ENCODE measurements at regions of chr2 and their contacts with region 1.

Region 1: DNA sequence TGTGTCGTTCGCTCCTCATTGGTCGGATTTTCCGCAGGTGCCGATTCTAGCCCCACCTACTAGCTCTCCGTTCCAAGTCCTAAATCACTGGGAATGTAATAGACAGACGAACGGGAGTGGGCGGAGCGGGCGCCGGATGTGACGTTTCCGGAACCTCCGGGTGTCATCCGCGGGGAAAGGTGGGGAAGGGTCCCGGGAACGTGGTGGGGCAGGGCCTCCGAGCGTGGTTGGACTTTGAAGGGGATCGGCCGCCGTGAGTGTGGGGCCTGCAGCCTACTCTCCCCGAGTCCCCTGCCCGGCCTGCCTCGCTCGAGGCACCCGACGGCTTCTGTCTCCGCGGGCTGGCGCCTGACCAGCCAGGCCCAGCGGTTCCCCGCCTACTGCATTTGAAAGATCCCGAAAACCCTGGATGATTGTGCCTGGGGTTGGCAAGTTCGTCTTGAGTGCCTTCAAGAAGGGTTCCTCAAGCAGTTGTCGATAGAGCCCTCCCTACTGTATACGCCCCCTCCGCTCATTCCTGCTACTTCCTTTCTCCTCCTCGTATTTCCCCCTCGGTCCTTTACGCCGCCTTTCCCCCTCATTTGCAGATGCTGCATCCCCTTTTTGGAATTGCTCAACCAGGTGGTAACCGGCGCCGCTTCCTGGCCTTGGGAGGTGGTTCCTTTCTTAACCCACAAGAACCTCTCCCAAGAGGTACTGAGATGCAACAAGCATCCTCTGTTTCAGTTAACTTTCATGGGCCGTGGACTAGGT is at the start of gene STAMBP:
- DNase-seq: peak; percentile 95
- ATAC-seq: peak; percentile 75
- H3K4me3 Mint-ChIP-seq: peak within 1 kb of the TSS; percentile 97
- H3K27ac Mint-ChIP-seq: peak within 1 kb of the TSS; percentile 98
- H3K4me1 Mint-ChIP-seq: peaks cover 53% of the 10 kb centered on the region
- H3K27me3 Mint-ChIP-seq: no peaks in the 10 kb centered on the region
- total RNA-seq, gene STAMBP: 104 to 111 TPM

Region 2: GRCh38 chr2:73233154-73233931 is 595.7 kb before region 1 on chr2 and contains the start of gene PRADC1:
- CTCF ChIA-PET with region 1: no interaction called
- POLR2A ChIA-PET with region 1: no interaction called
- intact Hi-C with region 1: loop called in 1 of 2 experiments (anchors 2 kb)
- DNase-seq: peak; percentile 96
- ATAC-seq: peak; percentile 89
- H3K4me3 Mint-ChIP-seq: peak within 1 kb of the TSS; percentile 92
- H3K27ac Mint-ChIP-seq: peak within 1 kb of the TSS; percentile 98
- H3K4me1 Mint-ChIP-seq: peaks cover 32% of the 10 kb centered on the region
- H3K27me3 Mint-ChIP-seq: no peaks in the 10 kb centered on the region
- total RNA-seq, gene PRADC1: 11.8 to 12.1 TPM

Region 3: DNA sequence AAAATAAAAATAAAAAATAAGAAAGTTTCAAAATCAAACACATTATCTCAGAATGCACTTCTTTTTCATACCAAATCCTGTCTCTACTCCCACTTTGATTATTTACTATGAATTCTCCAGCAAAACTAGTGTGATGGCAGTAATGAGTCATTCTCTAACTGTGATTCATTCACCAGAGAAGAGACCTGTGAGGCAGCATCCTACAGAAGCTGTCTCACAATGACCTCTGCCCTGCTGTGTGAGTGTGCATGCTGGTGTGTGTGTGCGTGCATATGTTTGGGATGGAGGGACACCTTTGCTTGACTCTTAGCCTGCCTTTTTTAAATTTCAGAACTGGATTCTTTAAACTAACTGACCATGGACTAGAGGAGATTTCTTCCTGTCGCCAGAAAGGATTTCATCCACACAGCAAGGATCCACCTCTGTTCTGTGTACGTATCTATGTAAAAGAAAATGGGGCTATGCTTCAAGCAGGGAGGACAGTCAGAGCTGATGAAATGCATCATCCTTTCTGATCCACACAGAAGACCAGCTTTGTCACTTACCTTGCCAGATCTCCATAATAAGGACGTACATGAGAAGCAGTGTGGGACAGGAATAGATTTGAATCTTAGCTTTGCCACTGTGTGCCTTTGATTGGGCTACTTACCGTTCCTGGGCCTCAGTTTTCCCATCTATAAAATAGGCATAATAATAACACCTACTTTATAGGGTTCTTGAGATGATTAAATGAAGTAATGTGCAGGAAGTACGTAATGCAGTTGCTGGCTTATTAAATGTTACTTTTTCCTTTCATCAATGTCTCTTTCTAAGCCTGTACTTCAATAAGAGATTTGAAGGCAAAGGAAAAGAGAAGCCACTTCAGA is 31.0 kb after region 1 on chr2:
- CTCF ChIA-PET with region 1: interaction called, 12 read pairs
- POLR2A ChIA-PET with region 1: no interaction called
- intact Hi-C with region 1: loop called (anchors 1 kb)
- DNase-seq: peak; percentile 76
- ATAC-seq: peak; percentile 100
- H3K4me3 Mint-ChIP-seq: no peak overlapping the region
- H3K27ac Mint-ChIP-seq: peak overlapping the region; percentile 77
- H3K4me1 Mint-ChIP-seq: peaks cover 32% of the 10 kb centered on the region
- H3K27me3 Mint-ChIP-seq: no peaks in the 10 kb centered on the region

Region 4: DNA sequence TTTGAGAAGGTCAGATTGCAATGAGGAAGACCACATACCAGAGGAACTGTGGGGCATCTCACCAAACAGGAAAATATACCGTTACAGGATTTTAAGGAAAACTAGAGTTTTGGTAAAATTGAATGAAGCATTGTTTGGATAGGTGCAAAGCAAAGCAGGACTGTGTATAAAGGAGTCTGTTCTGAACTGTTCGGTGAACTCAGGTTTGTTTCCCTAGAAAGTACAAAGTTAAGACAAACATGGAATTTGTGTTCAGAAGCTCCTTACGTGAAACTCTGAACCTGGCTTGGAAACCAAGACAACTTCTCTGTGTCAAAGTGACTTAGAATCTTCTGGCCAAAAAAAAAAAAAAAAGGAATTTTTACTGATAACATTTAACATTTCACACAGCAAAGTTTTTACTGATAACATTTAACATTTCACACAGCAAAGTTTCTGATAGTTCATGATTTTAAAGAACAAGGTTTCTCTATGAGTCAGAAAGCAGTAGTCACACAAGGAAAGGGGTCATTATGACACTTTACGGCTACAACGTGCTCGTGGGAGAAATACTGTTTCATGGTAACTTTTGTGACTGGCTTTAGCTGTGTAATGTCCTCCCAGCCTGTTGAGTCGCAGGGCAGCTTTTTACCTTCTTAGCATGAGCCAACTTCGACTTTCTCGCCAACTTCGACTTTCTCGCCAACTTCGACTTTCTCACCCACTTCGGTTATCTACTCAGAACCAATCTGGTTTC is 134.6 kb after region 1 on chr2:
- CTCF ChIA-PET with region 1: no interaction called
- POLR2A ChIA-PET with region 1: no interaction called
- intact Hi-C with region 1: loop called in 1 of 2 experiments (anchors 1 kb)
- DNase-seq: peak; percentile 72
- ATAC-seq: peak; percentile 95
- H3K4me3 Mint-ChIP-seq: peak overlapping the region; percentile 37
- H3K27ac Mint-ChIP-seq: peak overlapping the region; percentile 90
- H3K4me1 Mint-ChIP-seq: peaks cover 41% of the 10 kb centered on the region
- H3K27me3 Mint-ChIP-seq: no peaks in the 10 kb centered on the region

Region 5: DNA sequence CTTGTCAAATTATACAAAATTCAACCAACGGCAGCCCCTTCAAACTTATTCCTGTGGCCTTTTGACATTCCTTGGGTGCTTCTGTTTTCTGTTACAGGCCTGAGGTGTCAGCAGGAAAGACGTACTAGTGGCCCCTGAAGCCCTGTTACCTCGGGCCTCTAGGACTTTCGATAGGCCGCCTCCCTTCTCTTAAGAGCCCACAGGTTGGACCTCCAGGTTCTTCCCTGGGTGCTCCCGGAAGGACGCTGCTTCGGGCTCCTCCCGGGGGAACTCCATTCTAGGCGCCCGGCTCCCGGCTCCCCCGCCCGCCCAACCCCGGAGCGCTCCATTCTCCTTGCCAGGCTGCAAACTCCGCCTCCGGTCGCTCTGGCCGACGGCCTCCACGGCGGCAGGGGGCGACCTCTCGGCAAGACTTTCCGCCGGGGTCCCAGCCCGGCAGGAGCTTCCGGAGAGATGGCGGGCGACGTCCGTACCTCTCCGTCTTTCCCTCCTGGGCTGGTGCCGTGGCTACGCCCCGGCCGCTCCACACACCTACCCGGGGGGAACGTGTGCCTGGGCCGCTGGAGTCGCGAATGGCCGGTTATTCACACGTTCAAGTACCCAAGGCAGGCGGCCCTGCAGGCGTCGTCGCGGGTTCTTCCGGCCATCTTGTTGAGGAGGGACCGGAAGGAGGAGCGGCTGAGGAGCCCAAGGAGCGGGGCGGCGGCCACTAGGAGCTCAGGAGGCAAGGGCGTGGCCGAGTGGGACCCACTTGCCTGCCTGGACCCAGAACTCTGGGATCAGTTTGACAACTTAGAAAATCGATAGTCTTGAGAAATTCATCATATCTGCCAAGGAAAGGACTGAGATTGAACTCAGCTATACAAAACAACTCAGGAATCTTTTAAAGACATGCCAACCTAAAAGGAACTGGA is 291.2 kb after region 1 on chr2:
- CTCF ChIA-PET with region 1: interaction called, 25 read pairs
- POLR2A ChIA-PET with region 1: no interaction called
- intact Hi-C with region 1: loop called in 1 of 2 experiments (anchors 1 kb)
- DNase-seq: peak; percentile 92
- ATAC-seq: peak; percentile 97
- H3K4me3 Mint-ChIP-seq: peak overlapping the region; percentile 81
- H3K27ac Mint-ChIP-seq: peak overlapping the region; percentile 89
- H3K4me1 Mint-ChIP-seq: peaks cover 7% of the 10 kb centered on the region
- H3K27me3 Mint-ChIP-seq: peaks cover 3% of the 10 kb centered on the region

Region 6: GRCh38 chr2:74334931-74335333 is 505.9 kb after region 1 on chr2:
- CTCF ChIA-PET with region 1: interaction called, 28 read pairs
- POLR2A ChIA-PET with region 1: no interaction called
- intact Hi-C with region 1: loop called (anchors 1 to 10 kb)
- DNase-seq: peak; percentile 86
- ATAC-seq: peak; percentile 81
- H3K4me3 Mint-ChIP-seq: no peak overlapping the region
- H3K27ac Mint-ChIP-seq: no peak overlapping the region
- H3K4me1 Mint-ChIP-seq: no peaks in the 10 kb centered on the region
- H3K27me3 Mint-ChIP-seq: no peaks in the 10 kb centered on the region

Measured in activated CD4-positive, alpha-beta T cell treated with anti-CD3 and anti-CD28 coated beads for 36 hours (primary cell).